Mammary epithelial cell (primary cell): ENCODE measurements at regions of chr18 and their contacts with region 1.

Region 1: GRCh38 chr18:78376046-78376445 is 603.6 kb upstream of the SALL3 start:
- DNase-seq: no peak
- H3K4me3 ChIP-seq: no peak overlapping the region
- H3K27ac ChIP-seq: no peak overlapping the region
- H3K4me1 ChIP-seq: no peaks in the 10 kb centered on the region
- H3K27me3 ChIP-seq: no peaks in the 10 kb centered on the region
- CTCF ChIP-seq: no peak

Region 2: DNA sequence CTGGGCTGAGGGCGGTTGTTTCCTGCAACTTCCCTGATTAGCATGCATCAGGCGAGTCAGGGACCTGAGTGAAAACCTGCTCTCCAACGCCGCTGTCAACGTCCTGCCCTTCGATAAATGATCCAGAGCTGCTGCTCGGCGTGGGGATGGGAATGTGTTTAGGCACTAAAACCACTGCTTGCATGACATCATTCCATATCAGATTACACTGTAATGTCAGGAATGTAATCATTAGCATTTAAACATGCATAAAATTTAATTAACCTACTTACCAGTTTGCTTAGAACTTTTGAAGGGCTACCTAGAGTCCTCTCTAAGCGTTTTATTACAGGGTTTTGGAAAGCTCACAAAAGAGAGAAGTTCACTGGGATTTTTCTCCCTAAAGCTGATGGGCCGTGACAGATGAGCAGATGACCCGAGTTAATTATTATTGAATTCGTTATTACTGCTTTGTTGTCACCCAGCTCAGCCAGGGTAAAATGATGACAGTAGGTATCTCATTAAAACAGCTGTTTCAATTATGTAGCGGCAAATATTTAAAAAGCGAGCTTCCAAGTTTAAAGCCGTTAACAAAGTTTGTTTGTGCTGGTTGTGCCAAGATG is 82.0 kb before region 1 on chr18:
- CTCF ChIA-PET with region 1: no interaction called
- dilution Hi-C with region 1: loop called (anchors 10 kb)
- in situ Hi-C with region 1: no loop called
- intact Hi-C with region 1: no loop called
- DNase-seq: no peak
- H3K4me3 ChIP-seq: no peak overlapping the region
- H3K27ac ChIP-seq: no peak overlapping the region
- H3K4me1 ChIP-seq: no peaks in the 10 kb centered on the region
- H3K27me3 ChIP-seq: no peaks in the 10 kb centered on the region
- CTCF ChIP-seq: no peak